ENCODE measurements at regions of chr6 and their contacts with region 1.

Region 1: GRCh38 chr6:114952229-114952628 is 609.4 kb upstream of the HS3ST5 start:
- DNase-seq: no peak
- H3K4me3 Mint-ChIP-seq: no peak overlapping the region
- H3K27ac Mint-ChIP-seq: no peak overlapping the region
- H3K4me1 Mint-ChIP-seq: no peaks in the 10 kb centered on the region
- H3K27me3 Mint-ChIP-seq: no peaks in the 10 kb centered on the region

Region 2: GRCh38 chr6:114281496-114281895 is 670.7 kb before region 1 on chr6:
- intact Hi-C with region 1: no loop called
- DNase-seq: no peak
- H3K4me3 Mint-ChIP-seq: no peak overlapping the region
- H3K27ac Mint-ChIP-seq: no peak overlapping the region
- H3K4me1 Mint-ChIP-seq: no peaks in the 10 kb centered on the region
- H3K27me3 Mint-ChIP-seq: peaks cover 3% of the 10 kb centered on the region

Region 3: GRCh38 chr6:114816678-114817077 is 135.6 kb before region 1 on chr6:
- intact Hi-C with region 1: no loop called
- DNase-seq: no peak
- H3K4me3 Mint-ChIP-seq: no peak overlapping the region
- H3K27ac Mint-ChIP-seq: no peak overlapping the region
- H3K4me1 Mint-ChIP-seq: no peaks in the 10 kb centered on the region
- H3K27me3 Mint-ChIP-seq: no peaks in the 10 kb centered on the region

Region 4: DNA sequence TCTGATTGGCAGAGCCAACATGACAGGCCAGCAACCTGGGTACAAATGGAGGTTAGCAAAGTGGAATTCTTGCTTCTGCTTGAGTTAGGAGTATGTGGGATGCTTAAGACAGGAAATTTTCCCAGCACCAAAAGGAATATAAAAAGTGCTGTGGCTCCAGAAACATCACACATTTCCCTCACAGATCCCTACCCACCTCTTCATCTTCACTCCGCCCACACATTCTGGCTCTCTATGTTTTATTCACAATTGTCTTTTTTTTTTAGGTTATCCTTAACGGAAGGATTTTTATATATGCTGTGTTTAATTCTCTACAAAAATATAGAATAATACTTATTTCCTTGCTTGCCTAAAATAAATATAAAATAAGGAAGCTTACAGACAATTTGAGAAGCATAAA is 46.1 kb before region 1 on chr6:
- intact Hi-C with region 1: no loop called
- DNase-seq: no peak
- H3K4me3 Mint-ChIP-seq: no peak overlapping the region
- H3K27ac Mint-ChIP-seq: no peak overlapping the region
- H3K4me1 Mint-ChIP-seq: no peaks in the 10 kb centered on the region
- H3K27me3 Mint-ChIP-seq: no peaks in the 10 kb centered on the region

Region 5: GRCh38 chr6:114941078-114941477 is 11.2 kb before region 1 on chr6:
- intact Hi-C with region 1: no loop called
- DNase-seq: no peak
- H3K4me3 Mint-ChIP-seq: no peak overlapping the region
- H3K27ac Mint-ChIP-seq: no peak overlapping the region
- H3K4me1 Mint-ChIP-seq: no peaks in the 10 kb centered on the region
- H3K27me3 Mint-ChIP-seq: no peaks in the 10 kb centered on the region

Region 6: GRCh38 chr6:115363379-115363778 is 411.1 kb after region 1 on chr6:
- intact Hi-C with region 1: loop called (anchors 5 kb)
- DNase-seq: no peak
- H3K4me3 Mint-ChIP-seq: no peak overlapping the region
- H3K27ac Mint-ChIP-seq: no peak overlapping the region
- H3K4me1 Mint-ChIP-seq: no peaks in the 10 kb centered on the region
- H3K27me3 Mint-ChIP-seq: no peaks in the 10 kb centered on the region